ENCODE measurements at regions of chr1 and their contacts with region 1.

Region 1: GRCh38 chr1:6579374-6580118 is at the start of gene ZBTB48:
- DNase-seq: peak; percentile 92 to 97 (median 94)
- ATAC-seq: peak; percentile 98
- H3K4me3 ChIP-seq: peak within 1 kb of the TSS; percentile 76
- H3K4me3 Mint-ChIP-seq: peak within 1 kb of the TSS; percentile 76 to 97 (median 96)
- H3K27ac ChIP-seq: peak within 1 kb of the TSS; percentile 91
- H3K27ac Mint-ChIP-seq: peak within 1 kb of the TSS; percentile 88 to 98 (median 95)
- H3K4me1 ChIP-seq: peaks cover 25 to 27% of the 10 kb centered on the region in 2 donors
- H3K4me1 Mint-ChIP-seq: peaks cover 27 to 43% (median 35%) of the 10 kb centered on the region in 7 donors
- H3K27me3 ChIP-seq: no peaks in the 10 kb centered on the region
- H3K27me3 Mint-ChIP-seq: no peaks in the 10 kb centered on the region
- total RNA-seq, gene ZBTB48: 39.1 to 70.4 (median 62.2) TPM

Region 2: DNA sequence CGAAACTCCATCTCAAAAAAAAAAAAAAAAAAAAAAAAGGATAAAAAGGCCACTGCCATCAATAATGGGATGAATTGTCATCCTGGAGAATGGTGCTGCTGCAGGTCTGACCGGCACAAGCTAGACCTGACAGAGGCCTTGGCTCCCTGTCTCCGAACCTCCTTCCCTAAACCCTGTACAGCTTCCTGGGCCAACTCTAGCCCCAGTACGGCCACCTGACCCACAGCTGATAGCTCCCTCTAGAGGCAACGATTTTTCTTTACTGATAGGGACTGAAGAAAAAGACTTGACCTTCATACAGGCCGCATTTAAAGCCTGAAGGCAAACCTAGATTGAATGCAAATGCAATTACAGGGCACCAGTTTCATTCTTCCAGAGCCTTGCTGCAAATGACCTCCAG is 56.0 kb before region 1 on chr1:
- CTCF ChIA-PET with region 1: no interaction called
- POLR2A ChIA-PET with region 1: no interaction called
- intact Hi-C with region 1: no loop called
- DNase-seq: no peak
- ATAC-seq: no peak
- H3K4me3 ChIP-seq: no peak overlapping the region
- H3K4me3 Mint-ChIP-seq: no peak overlapping the region
- H3K27ac ChIP-seq: no peak overlapping the region
- H3K27ac Mint-ChIP-seq: peak overlapping the region in 6 of 9 donors; percentile 14 to 84 (median 48)
- H3K4me1 ChIP-seq: no peaks in the 10 kb centered on the region
- H3K4me1 Mint-ChIP-seq: peaks cover 0 to 11% (median 5%) of the 10 kb centered on the region in 7 donors
- H3K27me3 ChIP-seq: no peaks in the 10 kb centered on the region
- H3K27me3 Mint-ChIP-seq: no peaks in the 10 kb centered on the region

Region 3: GRCh38 chr1:6613361-6614018 is 33.9 kb after region 1 on chr1 and contains the start of gene PHF13:
- CTCF ChIA-PET with region 1: interaction called, 5 read pairs
- POLR2A ChIA-PET with region 1: interaction called, 5 read pairs
- intact Hi-C with region 1: loop called (anchors 1 kb)
- DNase-seq: peak; percentile 97 to 99 (median 98)
- ATAC-seq: peak; percentile 98
- H3K4me3 ChIP-seq: peak within 1 kb of the TSS; percentile 53
- H3K4me3 Mint-ChIP-seq: peak within 1 kb of the TSS; percentile 88 to 97 (median 93)
- H3K27ac ChIP-seq: peak within 1 kb of the TSS; percentile 82
- H3K27ac Mint-ChIP-seq: peak within 1 kb of the TSS; percentile 69 to 95 (median 88)
- H3K4me1 ChIP-seq: peaks cover 0 to 14% of the 10 kb centered on the region in 2 donors
- H3K4me1 Mint-ChIP-seq: peaks cover 16 to 37% (median 25%) of the 10 kb centered on the region in 7 donors
- H3K27me3 ChIP-seq: no peaks in the 10 kb centered on the region
- H3K27me3 Mint-ChIP-seq: peaks cover 0 to 2% (median 0%) of the 10 kb centered on the region in 5 donors
- total RNA-seq, gene PHF13: 7.7 to 14.3 (median 12.2) TPM

Region 4: GRCh38 chr1:6701437-6702153 is 122.0 kb after region 1 on chr1 and contains the start of gene DNAJC11:
- CTCF ChIA-PET with region 1: no interaction called
- POLR2A ChIA-PET with region 1: interaction called, 4 read pairs
- intact Hi-C with region 1: loop called in 1 of 2 experiments (anchors 1 kb)
- DNase-seq: peak; percentile 84 to 99 (median 93)
- ATAC-seq: peak; percentile 99
- H3K4me3 ChIP-seq: peak within 1 kb of the TSS; percentile 90
- H3K4me3 Mint-ChIP-seq: peak within 1 kb of the TSS; percentile 87 to 96 (median 93)
- H3K27ac ChIP-seq: peak within 1 kb of the TSS; percentile 92
- H3K27ac Mint-ChIP-seq: peak within 1 kb of the TSS; percentile 77 to 95 (median 92)
- H3K4me1 ChIP-seq: peaks cover 8 to 9% of the 10 kb centered on the region in 2 donors
- H3K4me1 Mint-ChIP-seq: peaks cover 7 to 40% (median 32%) of the 10 kb centered on the region in 7 donors
- H3K27me3 ChIP-seq: no peaks in the 10 kb centered on the region
- H3K27me3 Mint-ChIP-seq: no peaks in the 10 kb centered on the region
- total RNA-seq, gene DNAJC11: 37.2 to 49.7 (median 44.0) TPM

Region 5: GRCh38 chr1:6743189-6744101 is 163.9 kb after region 1 on chr1:
- CTCF ChIA-PET with region 1: no interaction called
- POLR2A ChIA-PET with region 1: no interaction called
- intact Hi-C with region 1: no loop called
- DNase-seq: peak in 8 of 9 donors; percentile 25 to 69 (median 38)
- ATAC-seq: peak; percentile 63
- H3K4me3 ChIP-seq: no peak overlapping the region
- H3K4me3 Mint-ChIP-seq: peak overlapping the region in 2 of 10 donors; percentile 26 to 36
- H3K27ac ChIP-seq: no peak overlapping the region
- H3K27ac Mint-ChIP-seq: peak overlapping the region in 4 of 9 donors; percentile 1 to 85 (median 37)
- H3K4me1 ChIP-seq: no peaks in the 10 kb centered on the region
- H3K4me1 Mint-ChIP-seq: peaks cover 6 to 12% (median 9%) of the 10 kb centered on the region in 7 donors
- H3K27me3 ChIP-seq: no peaks in the 10 kb centered on the region
- H3K27me3 Mint-ChIP-seq: peaks cover 0 to 16% (median under 1%) of the 10 kb centered on the region in 5 donors

Region 6: DNA sequence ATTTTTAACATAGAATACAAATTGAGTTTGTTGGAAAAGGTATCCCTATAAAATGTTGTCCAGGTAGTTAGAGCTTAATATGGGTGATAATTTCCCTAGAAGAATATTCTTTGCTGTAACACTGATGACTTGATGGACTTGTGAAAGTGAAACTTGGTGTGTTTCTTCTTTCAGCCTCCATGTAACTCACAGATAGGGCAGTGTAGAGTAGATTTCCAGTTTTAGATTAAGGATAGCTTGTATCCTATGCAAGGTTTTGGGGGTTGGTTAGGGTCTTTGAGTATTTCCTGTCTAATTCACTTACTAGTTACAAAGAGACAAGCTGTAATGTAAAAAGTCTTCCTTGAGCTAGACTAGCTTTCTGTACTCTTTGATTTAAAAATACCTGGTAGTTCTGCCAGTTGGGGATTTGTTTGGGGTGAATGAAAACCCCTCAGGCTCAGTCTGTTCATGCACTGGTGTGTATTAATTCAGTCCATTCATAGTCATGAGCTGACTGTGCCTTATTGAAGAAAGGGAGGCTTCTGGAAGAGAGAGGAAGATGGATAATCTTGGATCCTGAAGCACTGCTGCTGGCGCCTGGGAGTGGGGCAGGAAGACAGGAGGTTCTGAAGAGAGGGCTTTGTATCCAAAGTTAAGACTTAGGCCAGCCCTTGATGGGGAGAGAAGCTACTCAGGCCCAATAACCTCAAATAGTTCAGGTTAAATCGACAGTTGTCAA is 289.3 kb after region 1 on chr1:
- CTCF ChIA-PET with region 1: no interaction called
- POLR2A ChIA-PET with region 1: no interaction called
- intact Hi-C with region 1: no loop called
- DNase-seq: no peak
- ATAC-seq: no peak
- H3K4me3 ChIP-seq: no peak overlapping the region
- H3K4me3 Mint-ChIP-seq: no peak overlapping the region
- H3K27ac ChIP-seq: no peak overlapping the region
- H3K27ac Mint-ChIP-seq: peak overlapping the region in 3 of 9 donors; percentile 7 to 63 (median 12)
- H3K4me1 ChIP-seq: no peaks in the 10 kb centered on the region
- H3K4me1 Mint-ChIP-seq: peaks cover 26 to 62% (median 45%) of the 10 kb centered on the region in 7 donors
- H3K27me3 ChIP-seq: no peaks in the 10 kb centered on the region
- H3K27me3 Mint-ChIP-seq: no peaks in the 10 kb centered on the region

Region 7: GRCh38 chr1:7117599-7118281 is 538.2 kb after region 1 on chr1:
- CTCF ChIA-PET with region 1: no interaction called
- POLR2A ChIA-PET with region 1: no interaction called
- intact Hi-C with region 1: no loop called
- DNase-seq: no peak
- ATAC-seq: no peak
- H3K4me3 ChIP-seq: no peak overlapping the region
- H3K4me3 Mint-ChIP-seq: no peak overlapping the region
- H3K27ac ChIP-seq: no peak overlapping the region
- H3K27ac Mint-ChIP-seq: no peak overlapping the region
- H3K4me1 ChIP-seq: no peaks in the 10 kb centered on the region
- H3K4me1 Mint-ChIP-seq: peaks cover 0 to 1% (median 0%) of the 10 kb centered on the region in 7 donors
- H3K27me3 ChIP-seq: no peaks in the 10 kb centered on the region
- H3K27me3 Mint-ChIP-seq: peaks cover 0 to 11% (median 5%) of the 10 kb centered on the region in 5 donors

Measured in naive thymus-derived CD4-positive, alpha-beta T cell (primary cell).